ENCODE measurements at regions of chr21 and their contacts with region 1.

Region 1: GRCh38 chr21:33915368-33916199 is at the start of gene ATP5PO:
- DNase-seq: peak; percentile 98
- H3K4me3 Mint-ChIP-seq: peak within 1 kb of the TSS; percentile 94
- H3K27ac Mint-ChIP-seq: peak within 1 kb of the TSS; percentile 87
- H3K4me1 Mint-ChIP-seq: peaks cover 35% of the 10 kb centered on the region
- H3K27me3 Mint-ChIP-seq: no peaks in the 10 kb centered on the region
- total RNA-seq, gene ATP5PO: 193 to 196 TPM

Region 2: DNA sequence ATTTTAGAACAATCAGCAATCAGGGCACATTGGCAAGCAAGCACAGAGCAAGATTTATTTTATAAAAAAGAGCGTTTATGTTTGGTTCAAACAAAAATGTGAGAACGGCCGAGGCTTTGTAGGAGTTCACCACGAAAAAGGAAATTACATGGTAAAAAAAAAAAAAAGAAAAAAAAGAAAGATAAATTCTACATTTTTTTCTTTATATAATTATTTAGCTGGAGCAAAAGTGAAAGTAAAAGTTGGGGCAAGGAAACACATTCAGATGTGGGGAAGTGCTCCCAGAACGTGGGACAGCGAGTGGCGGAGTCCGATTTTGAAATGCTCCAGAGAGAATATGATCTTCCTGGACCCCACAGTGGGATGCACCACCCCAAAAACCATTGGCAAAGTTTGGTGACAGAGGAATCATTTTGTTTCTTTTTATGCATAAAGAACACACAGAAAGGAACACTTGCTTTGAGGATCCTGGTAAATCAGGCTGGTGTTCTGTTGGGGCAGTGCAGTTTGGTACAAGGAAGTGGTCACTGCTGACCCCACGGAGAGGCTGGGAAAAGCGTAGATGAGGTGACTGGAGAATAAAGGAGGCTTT is 16.3 kb after region 1 on chr21:
- CTCF ChIA-PET with region 1: no interaction called
- POLR2A ChIA-PET with region 1: interaction called, 12 read pairs
- DNase-seq: no peak
- H3K4me3 Mint-ChIP-seq: peak overlapping the region; percentile 94
- H3K27ac Mint-ChIP-seq: peak overlapping the region; percentile 97
- H3K4me1 Mint-ChIP-seq: peaks cover 48% of the 10 kb centered on the region
- H3K27me3 Mint-ChIP-seq: no peaks in the 10 kb centered on the region

Region 3: GRCh38 chr21:34004974-34005373 is 89.4 kb after region 1 on chr21:
- CTCF ChIA-PET with region 1: no interaction called
- POLR2A ChIA-PET with region 1: no interaction called
- DNase-seq: no peak
- H3K4me3 Mint-ChIP-seq: no peak overlapping the region
- H3K27ac Mint-ChIP-seq: no peak overlapping the region
- H3K4me1 Mint-ChIP-seq: peaks cover 16% of the 10 kb centered on the region
- H3K27me3 Mint-ChIP-seq: no peaks in the 10 kb centered on the region